ENCODE measurements at regions of chr12 and their contacts with region 1.

Region 1: GRCh38 chr12:56751712-56752598 is at the start of gene PRIM1:
- H3K4me3 Mint-ChIP-seq: peak within 1 kb of the TSS; percentile 87
- H3K27ac Mint-ChIP-seq: peak within 1 kb of the TSS; percentile 74
- H3K4me1 Mint-ChIP-seq: peaks cover 51% of the 10 kb centered on the region
- H3K27me3 Mint-ChIP-seq: no peaks in the 10 kb centered on the region

Region 2: GRCh38 chr12:56688129-56688845 is 63.7 kb before region 1 on chr12 and contains the start of gene PTGES3:
- intact Hi-C with region 1: loop called (anchors 2 kb)
- H3K4me3 Mint-ChIP-seq: peak within 1 kb of the TSS; percentile 99
- H3K27ac Mint-ChIP-seq: peak within 1 kb of the TSS; percentile 99
- H3K4me1 Mint-ChIP-seq: peaks cover 24% of the 10 kb centered on the region
- H3K27me3 Mint-ChIP-seq: no peaks in the 10 kb centered on the region